ENCODE measurements at regions of chr12 and their contacts with region 1.

Region 1: DNA sequence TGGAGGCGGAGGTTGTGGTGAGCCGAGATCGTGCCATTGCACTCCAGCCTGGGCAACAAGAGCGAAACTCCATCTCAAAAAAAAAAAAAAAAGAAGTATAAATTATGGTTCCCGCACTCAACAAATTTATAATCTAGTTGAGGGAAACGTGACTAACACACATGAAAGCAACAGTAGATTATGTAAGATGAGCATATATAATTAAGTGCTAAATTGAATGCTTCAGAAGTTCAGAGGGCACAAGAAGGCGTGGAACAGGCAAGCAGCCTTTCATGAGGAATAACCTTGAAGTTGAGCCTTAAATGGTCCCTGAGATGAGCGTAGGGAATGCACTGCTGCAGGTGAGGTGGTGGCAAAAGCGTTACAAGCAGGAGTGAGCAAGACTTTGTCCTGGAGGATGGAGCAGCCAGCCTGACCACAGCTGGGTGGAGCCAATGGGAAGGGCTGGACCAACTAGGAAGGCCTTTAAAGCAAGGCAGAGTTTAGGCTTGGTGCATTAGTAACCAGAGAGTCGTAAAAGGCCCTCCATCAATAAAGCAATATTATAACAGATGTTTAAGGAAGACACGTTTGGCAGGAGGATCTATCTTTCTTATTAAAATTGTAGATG is 30.6 kb upstream of the TUBA1A start:
- DNase-seq: no peak
- H3K4me3 ChIP-seq: no peak overlapping the region
- H3K27ac ChIP-seq: no peak overlapping the region
- H3K4me1 ChIP-seq: peaks cover 6% of the 10 kb centered on the region
- H3K27me3 ChIP-seq: no peaks in the 10 kb centered on the region
- CTCF ChIP-seq: no peak

Region 2: DNA sequence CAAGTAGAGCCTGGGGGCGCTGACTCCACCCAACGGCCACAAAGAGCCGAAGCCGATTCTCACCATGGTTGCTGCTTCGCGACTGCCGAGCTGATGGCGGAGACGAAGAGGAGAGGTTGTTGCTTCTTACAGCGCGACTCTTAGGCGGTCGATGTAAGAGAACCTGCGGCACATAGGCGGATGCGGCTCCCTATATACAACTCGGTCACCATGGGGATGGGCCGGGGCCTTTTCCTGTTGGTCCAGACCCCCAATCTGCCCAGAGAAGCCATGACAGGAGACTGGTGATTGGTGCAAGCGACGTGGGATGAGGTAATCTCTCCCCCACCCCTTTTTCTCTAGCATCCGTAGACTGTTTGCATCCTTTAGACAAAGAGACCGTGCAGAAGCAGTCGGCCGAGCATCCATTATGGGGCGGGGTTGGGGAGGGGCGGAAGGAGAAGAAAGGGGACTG is 30.6 kb before region 1 on chr12 and contains the start of gene TUBA1A:
- CTCF ChIA-PET with region 1: no interaction called
- dilution Hi-C with region 1: no loop called
- in situ Hi-C with region 1: no loop called
- intact Hi-C with region 1: loop called (anchors 2 kb)
- DNase-seq: peak; percentile 97
- H3K4me3 ChIP-seq: peak within 1 kb of the TSS; percentile 80 to 82 (median 81)
- H3K27ac ChIP-seq: peak within 1 kb of the TSS; percentile 90
- H3K4me1 ChIP-seq: peaks cover 16% of the 10 kb centered on the region
- H3K27me3 ChIP-seq: no peaks in the 10 kb centered on the region
- CTCF ChIP-seq: no peak
- total RNA-seq, gene TUBA1A: 194 to 540 TPM

Region 3: GRCh38 chr12:49208146-49208545 is 11.4 kb before region 1 on chr12:
- CTCF ChIA-PET with region 1: interaction called, 12 read pairs
- dilution Hi-C with region 1: no loop called
- in situ Hi-C with region 1: no loop called
- intact Hi-C with region 1: no loop called
- DNase-seq: no peak
- H3K4me3 ChIP-seq: no peak overlapping the region
- H3K27ac ChIP-seq: no peak overlapping the region
- H3K4me1 ChIP-seq: no peaks in the 10 kb centered on the region
- H3K27me3 ChIP-seq: no peaks in the 10 kb centered on the region
- CTCF ChIP-seq: no peak

Measured in mammary epithelial cell (primary cell).